ENCODE measurements at regions of chr9 and their contacts with region 1.

Region 1: DNA sequence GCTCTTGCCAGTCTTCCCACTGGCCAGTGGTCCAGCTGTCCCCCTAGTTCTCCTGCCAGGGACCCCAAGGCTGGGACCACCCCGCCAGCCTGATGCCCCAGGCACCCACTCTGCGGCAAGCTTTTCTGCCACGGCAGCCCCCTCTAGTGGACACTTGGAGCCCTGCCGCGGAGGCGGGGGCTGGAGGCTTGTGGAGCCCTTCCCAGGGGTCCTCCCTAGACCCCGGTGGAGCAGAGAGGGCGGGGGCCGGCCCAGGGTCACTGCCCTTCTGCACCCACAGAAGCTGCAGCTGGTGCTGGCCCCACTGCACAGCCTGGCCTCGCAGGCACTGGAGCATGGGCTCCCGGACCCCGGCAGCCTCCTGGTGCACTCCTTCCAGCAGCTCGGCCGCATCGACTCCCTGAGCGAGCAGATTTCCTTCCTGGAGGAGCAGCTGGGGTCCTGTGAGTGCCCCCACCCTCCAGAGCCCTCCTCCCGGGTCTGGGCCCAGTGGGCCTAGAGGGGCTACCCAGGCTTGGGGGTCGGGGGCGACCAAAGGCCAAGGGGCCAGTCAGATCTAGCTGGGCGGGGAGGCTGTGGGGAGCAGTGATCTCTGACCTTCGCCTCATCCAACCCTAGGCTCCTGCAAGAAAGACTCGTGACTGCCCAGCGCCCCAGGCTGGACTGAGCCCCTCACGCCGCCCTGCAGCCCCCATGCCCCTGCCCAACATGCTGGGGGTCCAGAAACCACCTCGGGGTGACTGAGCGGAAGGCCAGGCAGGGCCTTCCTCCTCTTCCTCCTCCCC is 9.1 kb downstream of the EGFL7 start:
- DNase-seq: peak; percentile 55
- ATAC-seq: peak; percentile 46
- H3K4me3 Mint-ChIP-seq: no peak overlapping the region
- H3K27ac Mint-ChIP-seq: no peak overlapping the region
- H3K4me1 Mint-ChIP-seq: no peaks in the 10 kb centered on the region
- H3K27me3 Mint-ChIP-seq: peaks cover under 1% of the 10 kb centered on the region

Region 2: GRCh38 chr9:136327313-136327974 is 344.4 kb before region 1 on chr9 and contains the start of gene GPSM1:
- CTCF ChIA-PET with region 1: no interaction called
- DNase-seq: no peak
- ATAC-seq: peak; percentile 66
- H3K4me3 Mint-ChIP-seq: peak within 1 kb of the TSS; percentile 28
- H3K27ac Mint-ChIP-seq: no peak within 1 kb of the TSS
- H3K4me1 Mint-ChIP-seq: peaks cover 4% of the 10 kb centered on the region
- H3K27me3 Mint-ChIP-seq: peaks cover under 1% of the 10 kb centered on the region
- total RNA-seq, gene GPSM1: 4.5 to 6.7 TPM

Region 3: DNA sequence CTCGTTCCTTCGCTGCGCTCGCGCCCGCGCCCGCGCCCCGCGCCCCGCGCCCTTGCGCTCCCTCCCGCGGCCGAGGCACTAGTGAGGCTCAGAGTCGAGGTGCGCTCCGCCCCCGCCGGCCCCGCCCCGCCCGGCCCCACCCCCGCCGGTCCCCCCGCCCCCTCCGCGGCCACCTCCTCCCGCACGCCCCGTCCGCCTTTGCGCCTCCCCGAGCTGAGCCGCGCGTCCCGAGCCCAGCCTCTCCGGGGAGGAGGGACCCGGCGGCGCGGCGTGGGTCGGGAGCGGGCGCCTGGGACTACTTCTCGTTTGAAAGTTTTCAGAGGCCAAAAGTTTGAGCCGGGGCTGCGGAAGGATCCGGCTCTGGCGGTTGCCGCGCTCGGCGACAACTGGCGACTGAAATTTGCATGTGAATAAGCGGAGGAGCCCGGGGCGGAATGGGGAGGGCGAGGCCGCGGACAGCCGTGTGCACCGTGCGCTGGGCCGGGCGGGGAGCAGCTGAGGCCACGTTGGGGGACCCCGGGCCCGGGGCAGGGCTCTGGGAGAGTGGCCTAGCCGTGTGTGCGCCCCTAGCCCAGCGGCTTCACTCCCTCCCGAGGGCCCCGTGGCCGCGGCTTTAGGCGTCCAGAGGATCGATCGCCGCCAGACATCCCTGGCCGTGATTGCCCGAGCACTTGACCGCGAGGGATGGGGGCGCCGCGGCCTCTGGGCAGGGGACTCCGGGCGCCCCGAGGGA is 125.7 kb before region 1 on chr9 and contains the start of gene NOTCH1:
- CTCF ChIA-PET with region 1: no interaction called
- DNase-seq: peak; percentile 88
- ATAC-seq: peak; percentile 76
- H3K4me3 Mint-ChIP-seq: peak within 1 kb of the TSS; percentile 88
- H3K27ac Mint-ChIP-seq: peak within 1 kb of the TSS; percentile 78
- H3K4me1 Mint-ChIP-seq: peaks cover 34% of the 10 kb centered on the region
- H3K27me3 Mint-ChIP-seq: no peaks in the 10 kb centered on the region
- total RNA-seq, gene NOTCH1: 67.3 to 73.5 TPM

Region 4: GRCh38 chr9:136655536-136656182 is 16.2 kb before region 1 on chr9:
- CTCF ChIA-PET with region 1: interaction called, 15 read pairs
- DNase-seq: no peak
- ATAC-seq: no peak
- H3K4me3 Mint-ChIP-seq: no peak overlapping the region
- H3K27ac Mint-ChIP-seq: no peak overlapping the region
- H3K4me1 Mint-ChIP-seq: peaks cover 5% of the 10 kb centered on the region
- H3K27me3 Mint-ChIP-seq: peaks cover 46% of the 10 kb centered on the region

Region 5: GRCh38 chr9:136686794-136687711 is 15.2 kb after region 1 on chr9 and contains the start of gene AGPAT2:
- CTCF ChIA-PET with region 1: interaction called, 33 read pairs
- DNase-seq: peak; percentile 79
- ATAC-seq: peak; percentile 90
- H3K4me3 Mint-ChIP-seq: peak within 1 kb of the TSS; percentile 67
- H3K27ac Mint-ChIP-seq: peak within 1 kb of the TSS; percentile 59
- H3K4me1 Mint-ChIP-seq: peaks cover 13% of the 10 kb centered on the region
- H3K27me3 Mint-ChIP-seq: peaks cover 10% of the 10 kb centered on the region
- total RNA-seq, gene AGPAT2: 16.9 to 20.5 TPM

Measured in activated CD8-positive, alpha-beta memory T cell treated with anti-CD3 and anti-CD28 coated beads, Interleukin-2, amount 10 ng/mL, durations not matched to agents 7 days and 5 days (primary cell).